RWPE1 (cell line): ENCODE measurements at regions of chr7 and their contacts with region 1.

Region 1: GRCh38 chr7:95246831-95247370 is 77.4 kb downstream of the PON1 start:
- DNase-seq: peak; percentile 34
- H3K27ac ChIP-seq: no peak overlapping the region
- CTCF ChIP-seq: peak; percentile 55

Region 2: DNA sequence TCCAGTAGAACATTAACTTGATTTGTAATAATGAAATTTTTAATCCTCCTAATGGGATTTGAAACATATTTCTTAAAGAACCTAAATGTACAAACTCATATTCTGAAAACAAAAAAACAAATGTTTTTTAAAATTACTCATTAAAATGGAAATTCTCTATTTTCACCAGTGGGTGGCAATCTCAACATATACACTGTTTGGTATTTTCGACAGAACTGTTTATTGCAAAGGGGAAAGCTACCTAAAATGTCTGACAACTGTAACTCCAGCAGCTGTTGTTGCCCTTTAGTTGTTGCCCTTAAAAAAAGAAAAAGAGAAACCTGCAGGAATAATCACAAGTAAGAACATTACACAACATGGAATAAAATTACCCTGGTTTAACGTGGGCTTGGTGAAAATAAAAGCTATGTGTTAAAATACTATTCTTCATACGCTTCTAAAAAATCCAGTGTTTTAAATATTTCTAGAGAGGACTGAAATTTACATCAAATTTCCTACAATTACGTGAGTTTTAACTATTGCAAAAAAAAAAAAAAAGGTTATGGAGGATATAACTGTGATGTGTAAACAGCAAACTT is 797.7 kb before region 1 on chr7:
- CTCF ChIA-PET with region 1: interaction called, 13 read pairs
- POLR2A ChIA-PET with region 1: no interaction called
- DNase-seq: peak; percentile 48
- H3K27ac ChIP-seq: no peak overlapping the region
- CTCF ChIP-seq: peak; percentile 88

Region 3: DNA sequence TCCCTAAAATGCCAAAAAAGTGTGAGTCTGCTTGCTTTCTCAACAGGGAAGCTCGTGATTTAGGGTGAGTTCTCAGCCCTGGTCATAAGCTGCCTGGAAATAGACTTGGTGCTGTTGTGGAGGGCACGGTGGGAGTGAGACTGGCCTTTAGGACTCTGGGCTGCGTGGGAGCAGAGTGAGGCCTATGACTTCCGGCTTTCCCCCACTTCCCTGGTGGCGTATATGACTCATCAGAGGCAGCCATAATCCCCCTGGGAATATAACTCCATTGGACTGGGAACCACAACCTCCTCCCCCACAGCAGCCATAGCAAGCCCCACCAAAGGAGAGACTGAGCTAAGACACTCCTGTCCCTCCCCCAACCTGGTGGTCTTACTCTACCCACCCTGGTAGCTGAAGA is 17.6 kb before region 1 on chr7:
- CTCF ChIA-PET with region 1: no interaction called
- POLR2A ChIA-PET with region 1: no interaction called
- DNase-seq: no peak
- H3K27ac ChIP-seq: no peak overlapping the region
- CTCF ChIP-seq: no peak

Region 4: GRCh38 chr7:95265634-95266033 is 18.7 kb after region 1 on chr7:
- CTCF ChIA-PET with region 1: interaction called, 10 read pairs
- POLR2A ChIA-PET with region 1: no interaction called
- DNase-seq: no peak
- H3K27ac ChIP-seq: no peak overlapping the region
- CTCF ChIP-seq: no peak

Region 5: GRCh38 chr7:95454438-95455045 is 207.6 kb after region 1 on chr7:
- CTCF ChIA-PET with region 1: no interaction called
- POLR2A ChIA-PET with region 1: no interaction called
- DNase-seq: no peak
- H3K27ac ChIP-seq: no peak overlapping the region
- CTCF ChIP-seq: no peak